ENCODE measurements at regions of chr2 and their contacts with region 1.

Region 1: DNA sequence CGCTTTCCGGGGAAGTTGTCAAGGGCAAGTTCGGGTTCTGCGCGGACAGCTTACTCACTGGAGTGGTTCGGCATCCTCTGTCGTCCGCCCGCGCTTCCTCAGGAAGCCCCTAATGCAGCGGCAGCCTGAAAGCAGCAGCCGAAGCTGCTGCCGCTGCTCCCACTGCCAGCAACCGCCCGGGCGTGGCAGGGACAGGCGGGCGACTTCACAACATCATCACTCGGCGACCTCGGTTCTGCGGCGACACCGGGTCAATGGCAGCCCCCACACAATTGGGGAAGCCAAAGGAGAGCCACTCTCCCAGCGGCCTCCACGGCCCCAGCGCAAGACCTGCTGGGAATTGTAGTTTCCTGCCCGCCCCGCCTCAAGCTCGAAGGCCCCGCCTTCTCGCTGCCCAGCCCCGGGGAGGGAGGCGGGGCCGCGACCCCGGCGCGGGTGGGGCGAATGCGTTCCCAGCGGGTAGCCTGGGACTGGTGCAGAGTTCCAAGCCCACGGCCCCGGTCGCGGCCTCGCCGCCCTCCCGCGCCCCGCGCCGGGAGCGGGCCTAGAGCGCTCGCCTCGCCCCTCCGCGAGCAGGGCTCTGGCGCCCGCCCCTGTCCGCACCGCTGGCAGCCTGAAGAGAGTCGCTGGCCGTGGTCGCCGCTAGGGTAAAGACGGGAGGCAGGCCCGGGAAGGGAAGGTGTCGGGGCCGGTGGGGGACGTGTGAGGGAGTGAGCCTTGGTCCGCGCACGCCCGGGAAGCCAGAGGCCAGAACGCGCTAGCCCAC is at the starts of genes STRADB and TRAK2:
- DNase-seq: peak; percentile 84 to 95 (median 92)
- ATAC-seq: peak; percentile 96
- H3K4me3 ChIP-seq: peak within 1 kb of the TSS; percentile 96
- H3K4me3 Mint-ChIP-seq: peak within 1 kb of the TSS; percentile 94 to 98 (median 97)
- H3K27ac ChIP-seq: peak within 1 kb of the TSS; percentile 83
- H3K27ac Mint-ChIP-seq: peak within 1 kb of the TSS; percentile 85 to 97 (median 95)
- H3K4me1 ChIP-seq: peaks cover 33 to 39% of the 10 kb centered on the region in 2 donors
- H3K4me1 Mint-ChIP-seq: peaks cover 27 to 69% (median 41%) of the 10 kb centered on the region in 7 donors
- H3K27me3 ChIP-seq: no peaks in the 10 kb centered on the region
- H3K27me3 Mint-ChIP-seq: peaks cover 0 to 8% (median 0%) of the 10 kb centered on the region in 5 donors
- total RNA-seq, gene STRADB: 11.9 to 18.4 (median 16.1) TPM
- total RNA-seq, gene TRAK2: 27.8 to 47.6 (median 35.2) TPM

Region 2: DNA sequence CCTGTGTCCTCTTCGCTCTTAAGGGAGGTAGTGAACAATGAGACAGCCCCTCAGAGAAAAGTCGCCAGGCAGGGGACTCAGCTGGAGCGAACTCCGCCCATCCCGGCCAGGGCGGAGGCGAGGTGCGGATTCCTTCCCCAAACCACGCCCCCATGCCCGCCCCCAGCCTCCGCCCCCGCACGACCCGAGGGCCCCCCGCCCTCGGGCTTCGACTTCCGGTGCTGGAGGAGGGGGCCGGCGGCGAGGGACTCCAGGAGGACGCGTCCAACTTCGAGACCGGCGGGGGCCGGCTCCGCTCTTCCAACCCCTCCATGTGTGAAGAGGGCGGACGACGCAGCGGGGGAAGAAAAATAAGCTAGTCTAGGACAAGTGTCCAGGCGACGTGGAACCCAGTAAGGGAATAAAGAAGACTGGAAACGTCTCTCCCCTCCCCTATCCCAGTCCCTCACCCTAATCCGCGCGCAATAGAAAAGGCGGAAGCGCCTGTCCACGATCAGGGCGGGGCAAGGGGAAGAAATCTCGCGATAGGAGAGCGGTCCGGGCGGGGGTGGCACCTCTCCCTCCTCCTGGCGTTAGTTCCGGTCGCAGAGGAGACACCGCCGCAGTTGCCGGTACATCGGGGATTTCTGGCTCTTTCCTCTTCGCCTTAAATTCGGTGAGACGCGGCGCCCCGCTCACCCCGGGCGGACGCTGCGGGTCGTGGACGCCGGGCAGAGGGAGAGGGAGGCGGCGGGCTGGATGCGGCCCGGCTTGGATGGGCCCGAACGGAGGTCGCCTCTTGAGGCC is 639.9 kb before region 1 on chr2 and contains the start of gene BZW1:
- CTCF ChIA-PET with region 1: no interaction called
- POLR2A ChIA-PET with region 1: no interaction called
- intact Hi-C with region 1: loop called in 1 of 2 experiments (anchors 1 kb)
- DNase-seq: peak; percentile 92 to 99 (median 98)
- ATAC-seq: peak; percentile 91
- H3K4me3 ChIP-seq: peak within 1 kb of the TSS; percentile 89
- H3K4me3 Mint-ChIP-seq: peak within 1 kb of the TSS; percentile 89 to 99 (median 98)
- H3K27ac ChIP-seq: peak within 1 kb of the TSS; percentile 99
- H3K27ac Mint-ChIP-seq: peak within 1 kb of the TSS; percentile 91 to 99 (median 98)
- H3K4me1 ChIP-seq: peaks cover 19 to 24% of the 10 kb centered on the region in 2 donors
- H3K4me1 Mint-ChIP-seq: peaks cover 30 to 56% (median 48%) of the 10 kb centered on the region in 7 donors
- H3K27me3 ChIP-seq: no peaks in the 10 kb centered on the region
- H3K27me3 Mint-ChIP-seq: peaks cover 0 to 2% (median 0%) of the 10 kb centered on the region in 5 donors
- total RNA-seq, gene BZW1: 127 to 246 (median 207) TPM

Region 3: GRCh38 chr2:200963124-200963917 is 488.2 kb before region 1 on chr2 and contains the start of gene ORC2:
- CTCF ChIA-PET with region 1: no interaction called
- POLR2A ChIA-PET with region 1: no interaction called
- intact Hi-C with region 1: loop called (anchors 1 to 5 kb)
- DNase-seq: peak; percentile 92 to 97 (median 95)
- ATAC-seq: peak; percentile 98
- H3K4me3 ChIP-seq: peak within 1 kb of the TSS; percentile 89
- H3K4me3 Mint-ChIP-seq: peak within 1 kb of the TSS; percentile 89 to 100 (median 98)
- H3K27ac ChIP-seq: peak within 1 kb of the TSS; percentile 90
- H3K27ac Mint-ChIP-seq: peak within 1 kb of the TSS; percentile 96 to 100 (median 99)
- H3K4me1 ChIP-seq: peaks cover 21 to 32% of the 10 kb centered on the region in 2 donors
- H3K4me1 Mint-ChIP-seq: peaks cover 40 to 83% (median 70%) of the 10 kb centered on the region in 7 donors
- H3K27me3 ChIP-seq: no peaks in the 10 kb centered on the region
- H3K27me3 Mint-ChIP-seq: no peaks in the 10 kb centered on the region
- total RNA-seq, gene ORC2: 29.8 to 78.0 (median 56.2) TPM

Region 4: DNA sequence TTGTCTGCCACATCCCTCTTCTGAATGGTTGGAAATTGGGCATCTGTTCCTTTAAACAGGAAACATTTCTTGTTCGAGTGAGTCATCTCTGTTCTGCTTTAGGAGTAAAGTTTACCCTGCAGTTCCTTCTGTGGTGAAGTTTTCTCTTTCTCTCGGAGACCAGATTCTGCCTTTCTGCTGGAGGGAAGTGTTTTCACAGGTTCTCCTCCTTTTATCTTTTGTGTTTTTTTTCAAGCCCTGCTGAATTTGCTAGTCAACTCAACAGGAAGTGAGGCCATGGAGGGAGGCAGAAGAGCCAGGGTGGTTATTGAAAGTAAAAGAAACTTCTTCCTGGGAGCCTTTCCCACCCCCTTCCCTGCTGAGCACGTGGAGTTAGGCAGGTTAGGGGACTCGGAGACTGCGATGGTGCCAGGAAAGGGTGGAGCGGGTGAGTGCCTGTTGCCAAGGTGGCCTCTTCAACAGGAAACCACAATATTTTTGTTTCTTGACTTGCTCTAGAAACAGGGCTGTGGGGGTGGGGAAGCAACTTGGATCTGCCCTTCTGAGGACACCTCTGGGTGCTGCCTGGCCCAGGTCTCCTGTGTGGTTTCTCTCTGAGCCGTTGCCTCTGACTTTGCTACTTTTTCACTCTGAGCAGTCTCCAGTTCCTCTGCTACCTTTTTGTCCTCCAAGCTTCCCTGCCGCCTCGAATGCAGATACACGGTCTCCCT is 193.4 kb before region 1 on chr2:
- CTCF ChIA-PET with region 1: no interaction called
- POLR2A ChIA-PET with region 1: interaction called, 10 read pairs
- intact Hi-C with region 1: loop called (anchors 1 kb)
- DNase-seq: peak; percentile 72 to 99 (median 98)
- ATAC-seq: peak; percentile 84
- H3K4me3 ChIP-seq: peak overlapping the region; percentile 80
- H3K4me3 Mint-ChIP-seq: peak overlapping the region; percentile 85 to 100 (median 94)
- H3K27ac ChIP-seq: peak overlapping the region; percentile 91
- H3K27ac Mint-ChIP-seq: peak overlapping the region; percentile 95 to 99 (median 98)
- H3K4me1 ChIP-seq: peaks cover 63 to 71% of the 10 kb centered on the region in 2 donors
- H3K4me1 Mint-ChIP-seq: peaks cover 44 to 91% (median 75%) of the 10 kb centered on the region in 7 donors
- H3K27me3 ChIP-seq: no peaks in the 10 kb centered on the region
- H3K27me3 Mint-ChIP-seq: no peaks in the 10 kb centered on the region

Region 5: GRCh38 chr2:201432038-201432620 is 19.3 kb before region 1 on chr2:
- CTCF ChIA-PET with region 1: no interaction called
- POLR2A ChIA-PET with region 1: interaction called, 26 read pairs
- intact Hi-C with region 1: loop called (anchors 1 kb)
- DNase-seq: peak in 7 of 9 donors; percentile 21 to 60 (median 39)
- ATAC-seq: peak; percentile 84
- H3K4me3 ChIP-seq: no peak overlapping the region
- H3K4me3 Mint-ChIP-seq: peak overlapping the region in 9 of 10 donors; percentile 14 to 76 (median 54)
- H3K27ac ChIP-seq: peak overlapping the region; percentile 38
- H3K27ac Mint-ChIP-seq: peak overlapping the region; percentile 65 to 94 (median 91)
- H3K4me1 ChIP-seq: peaks cover 20 to 23% of the 10 kb centered on the region in 2 donors
- H3K4me1 Mint-ChIP-seq: peaks cover 24 to 75% (median 66%) of the 10 kb centered on the region in 7 donors
- H3K27me3 ChIP-seq: no peaks in the 10 kb centered on the region
- H3K27me3 Mint-ChIP-seq: no peaks in the 10 kb centered on the region

Region 6: GRCh38 chr2:201780674-201781581 is 329.5 kb after region 1 on chr2 and contains the start of gene ALS2:
- CTCF ChIA-PET with region 1: no interaction called
- POLR2A ChIA-PET with region 1: interaction called, 3 read pairs
- intact Hi-C with region 1: loop called (anchors 1 kb)
- DNase-seq: peak; percentile 91 to 97 (median 95)
- ATAC-seq: peak; percentile 96
- H3K4me3 ChIP-seq: peak within 1 kb of the TSS; percentile 96
- H3K4me3 Mint-ChIP-seq: peak within 1 kb of the TSS; percentile 87 to 99 (median 98)
- H3K27ac ChIP-seq: peak within 1 kb of the TSS; percentile 84
- H3K27ac Mint-ChIP-seq: peak within 1 kb of the TSS; percentile 84 to 99 (median 97)
- H3K4me1 ChIP-seq: peaks cover 7 to 10% of the 10 kb centered on the region in 2 donors
- H3K4me1 Mint-ChIP-seq: peaks cover 5 to 36% (median 21%) of the 10 kb centered on the region in 7 donors
- H3K27me3 ChIP-seq: no peaks in the 10 kb centered on the region
- H3K27me3 Mint-ChIP-seq: peaks cover 0 to 22% (median 0%) of the 10 kb centered on the region in 5 donors
- total RNA-seq, gene ALS2: 8.9 to 13.5 (median 10.7) TPM

Region 7: DNA sequence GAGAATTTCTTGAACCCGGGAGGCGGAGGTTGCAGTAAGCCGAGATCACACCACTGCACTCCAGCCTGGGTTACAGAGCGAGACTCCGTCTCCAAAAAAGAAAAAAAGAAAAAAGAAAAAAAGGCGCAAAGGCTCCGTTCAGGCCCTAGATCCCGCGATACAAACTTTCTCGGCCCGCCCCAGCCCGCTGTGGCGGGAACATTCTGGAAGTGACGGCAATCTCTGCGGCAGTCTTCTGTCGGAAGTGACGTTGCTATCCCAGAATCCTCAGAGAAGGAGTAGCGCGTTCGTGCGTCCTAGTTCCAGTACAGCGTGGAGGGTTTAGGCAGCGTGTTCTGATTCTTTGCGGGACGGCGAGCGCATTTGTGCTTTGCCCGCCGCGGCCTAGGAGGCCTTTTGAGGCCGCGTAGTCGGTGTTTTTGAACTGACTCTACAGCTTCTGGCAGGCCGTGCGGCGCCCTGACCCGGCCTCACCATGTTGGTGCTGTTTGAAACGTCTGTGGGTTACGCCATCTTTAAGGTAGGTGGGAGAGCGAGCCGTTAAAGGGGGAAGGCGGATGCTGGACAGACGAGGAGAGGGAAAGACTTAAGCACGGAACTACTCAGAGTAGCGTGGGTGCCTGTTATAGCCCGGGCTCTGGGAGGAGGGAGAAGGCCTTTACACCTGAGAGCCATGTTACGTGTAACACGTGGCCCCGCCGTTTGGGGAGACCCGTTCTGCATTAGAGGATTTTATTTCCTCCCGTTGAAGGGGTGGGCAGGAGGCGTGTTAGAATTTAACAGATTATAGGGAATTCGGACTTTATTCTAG is 814.2 kb after region 1 on chr2 and contains the start of gene NOP58:
- CTCF ChIA-PET with region 1: no interaction called
- POLR2A ChIA-PET with region 1: no interaction called
- intact Hi-C with region 1: loop called (anchors 1 to 10 kb)
- DNase-seq: peak; percentile 69 to 96 (median 93)
- ATAC-seq: peak; percentile 90
- H3K4me3 ChIP-seq: peak within 1 kb of the TSS; percentile 93
- H3K4me3 Mint-ChIP-seq: peak within 1 kb of the TSS in 9 of 10 donors; percentile 53 to 71 (median 64)
- H3K27ac ChIP-seq: peak within 1 kb of the TSS; percentile 92
- H3K27ac Mint-ChIP-seq: peak within 1 kb of the TSS in 6 of 9 donors; percentile 4 to 83 (median 76)
- H3K4me1 ChIP-seq: peaks cover 17 to 34% of the 10 kb centered on the region in 2 donors
- H3K4me1 Mint-ChIP-seq: peaks cover 11 to 27% (median 21%) of the 10 kb centered on the region in 7 donors
- H3K27me3 ChIP-seq: no peaks in the 10 kb centered on the region
- H3K27me3 Mint-ChIP-seq: no peaks in the 10 kb centered on the region
- total RNA-seq, gene NOP58: 105 to 259 (median 110) TPM

Measured in naive thymus-derived CD4-positive, alpha-beta T cell (primary cell).